A549 (cell line): ENCODE measurements at regions of chr3 and their contacts with region 1.

Region 1: DNA sequence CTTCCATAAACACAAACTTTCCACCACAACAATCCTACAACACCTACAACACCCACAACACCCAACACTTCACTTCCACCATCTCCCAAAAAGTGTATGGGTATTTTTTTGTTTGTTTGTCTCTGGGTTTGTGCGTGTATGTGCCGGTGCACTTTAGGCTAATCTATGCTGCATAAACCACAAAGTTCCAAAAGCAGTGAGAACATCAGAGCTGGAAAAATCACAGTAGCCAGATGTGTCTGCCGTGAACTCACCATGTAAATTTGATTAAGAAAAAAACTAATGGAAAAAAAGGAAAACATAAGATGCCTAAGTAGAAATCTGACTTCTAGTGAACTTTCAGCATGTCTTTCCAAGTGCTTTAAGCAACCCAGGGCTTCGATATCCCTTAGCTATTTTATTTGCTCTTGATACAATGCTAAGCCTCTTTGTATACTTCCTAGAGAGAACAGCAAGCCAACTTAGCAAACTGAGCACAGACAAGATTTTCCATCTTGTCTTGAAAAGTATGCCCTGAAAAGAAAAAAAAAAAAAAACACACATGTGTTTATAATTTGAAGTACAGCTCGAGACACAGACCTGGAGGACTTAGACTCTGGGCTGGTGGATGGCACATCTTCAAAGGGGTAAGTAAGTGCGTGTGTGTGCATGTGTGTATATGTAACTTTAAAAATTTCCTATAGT is 91.4 kb downstream of the WWTR1 start:
- DNase-seq: no peak
- ATAC-seq: peak in 1 of 2 experiments; percentile 28; a peak in 1 of 6 replicates
- H3K4me3 ChIP-seq: no peak overlapping the region
- H3K27ac ChIP-seq: peak overlapping the region; percentile 24 to 74
- H3K4me1 ChIP-seq: peaks cover 76% of the 10 kb centered on the region
- CTCF ChIP-seq: no peak
- EP300 ChIP-seq: no peak
- POLR2A ChIP-seq: no peak
- RAD21 ChIP-seq: no peak

Region 2: GRCh38 chr3:149554826-149555225 is 11.6 kb before region 1 on chr3:
- CTCF ChIA-PET with region 1: interaction called, 15 read pairs
- POLR2A ChIA-PET with region 1: no interaction called
- DNase-seq: peak in 1 of 2 experiments; percentile 54
- ATAC-seq: peak; percentile 32 to 48; a peak in 2 of 6 replicates
- H3K4me3 ChIP-seq: no peak overlapping the region
- H3K27ac ChIP-seq: peak overlapping the region; percentile 64 to 79
- H3K4me1 ChIP-seq: peaks cover 76% of the 10 kb centered on the region
- CTCF ChIP-seq: no peak
- EP300 ChIP-seq: no peak
- POLR2A ChIP-seq: no peak
- RAD21 ChIP-seq: no peak

Region 3: DNA sequence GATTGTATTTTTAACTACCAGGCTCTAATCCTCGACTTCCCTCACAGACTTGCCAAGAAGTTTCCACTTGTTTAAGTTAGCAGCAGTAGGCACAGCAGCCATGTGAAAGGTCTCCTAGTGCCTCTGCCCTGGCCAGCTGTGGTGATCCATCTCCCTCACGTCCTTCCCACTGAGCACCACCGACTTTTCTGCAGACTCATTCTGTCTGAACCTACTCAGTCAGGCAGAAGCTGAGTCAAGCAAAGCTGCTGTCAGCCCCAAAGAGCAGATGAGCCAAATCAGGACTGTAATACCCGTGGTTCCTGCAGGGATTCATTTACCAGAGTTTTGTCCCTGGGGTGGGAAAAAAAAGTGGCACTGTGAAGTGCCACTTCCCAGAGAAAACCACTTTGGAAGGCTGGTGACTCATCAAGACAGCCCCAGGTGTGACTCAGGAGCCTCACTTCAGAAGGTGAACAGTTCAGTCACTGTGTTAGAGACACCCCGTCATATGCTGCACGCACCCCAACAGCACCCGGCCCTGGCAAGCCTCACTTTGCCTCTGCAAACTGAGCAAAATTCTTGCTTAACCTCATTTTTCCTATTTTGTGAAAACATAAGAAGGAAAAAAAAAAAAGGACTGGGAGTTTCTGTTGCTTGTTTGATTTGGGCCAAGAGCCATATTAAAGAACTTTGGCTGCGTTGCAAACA is 15.4 kb after region 1 on chr3:
- CTCF ChIA-PET with region 1: interaction called, 32 read pairs
- POLR2A ChIA-PET with region 1: no interaction called
- DNase-seq: peak; percentile 83 to 86
- ATAC-seq: peak; percentile 90 to 95
- H3K4me3 ChIP-seq: peak overlapping the region; percentile 18; the same call in 1 of the 3 replicates
- H3K27ac ChIP-seq: peak overlapping the region; percentile 94
- H3K4me1 ChIP-seq: peaks cover 100% of the 10 kb centered on the region
- CTCF ChIP-seq: no peak
- EP300 ChIP-seq: peak; percentile 30 to 36; a peak in 2 of 5 replicates
- POLR2A ChIP-seq: 0 out of 2 replicates have a peak, but pooled peaks have one; percentile 9
- RAD21 ChIP-seq: no peak; a peak in 1 of 5 replicates

Region 4: GRCh38 chr3:149589332-149589731 is 22.9 kb after region 1 on chr3:
- CTCF ChIA-PET with region 1: interaction called, 12 read pairs
- POLR2A ChIA-PET with region 1: no interaction called
- DNase-seq: no peak
- ATAC-seq: peak in 1 of 2 experiments; percentile 33; a peak in 1 of 6 replicates
- H3K4me3 ChIP-seq: no peak overlapping the region
- H3K27ac ChIP-seq: peak overlapping the region; percentile 72 to 88; a peak in 5 of 6 replicates
- H3K4me1 ChIP-seq: peaks cover 93% of the 10 kb centered on the region
- CTCF ChIP-seq: no peak
- EP300 ChIP-seq: no peak
- POLR2A ChIP-seq: no peak
- RAD21 ChIP-seq: no peak

Region 5: GRCh38 chr3:149736175-149736952 is 169.9 kb after region 1 on chr3:
- CTCF ChIA-PET with region 1: no interaction called
- POLR2A ChIA-PET with region 1: no interaction called
- DNase-seq: peak in 1 of 2 experiments; percentile 25
- ATAC-seq: no peak
- H3K4me3 ChIP-seq: no peak overlapping the region
- H3K27ac ChIP-seq: peak overlapping the region in 1 of 2 experiments; percentile 4; a peak in 1 of 6 replicates
- H3K4me1 ChIP-seq: peaks cover 7% of the 10 kb centered on the region; the same call in 1 of the 3 replicates
- CTCF ChIP-seq: no peak
- EP300 ChIP-seq: no peak
- POLR2A ChIP-seq: no peak
- RAD21 ChIP-seq: no peak

Region 6: GRCh38 chr3:150135287-150135721 is 568.9 kb after region 1 on chr3:
- CTCF ChIA-PET with region 1: no interaction called
- POLR2A ChIA-PET with region 1: no interaction called
- DNase-seq: no peak
- ATAC-seq: no peak
- H3K4me3 ChIP-seq: no peak overlapping the region
- H3K27ac ChIP-seq: no peak overlapping the region
- H3K4me1 ChIP-seq: no peaks in the 10 kb centered on the region
- CTCF ChIP-seq: no peak
- EP300 ChIP-seq: no peak
- POLR2A ChIP-seq: no peak
- RAD21 ChIP-seq: no peak